ENCODE measurements at regions of chr16 and their contacts with region 1.

Region 1: GRCh38 chr16:73058221-73058615 is 10.3 kb upstream of the ZFHX3 start:
- DNase-seq: peak; percentile 63 to 78
- H3K4me3 ChIP-seq: peak overlapping the region; percentile 58
- H3K4me3 Mint-ChIP-seq: peak overlapping the region; percentile 91
- H3K27ac Mint-ChIP-seq: no peak overlapping the region
- H3K4me1 ChIP-seq: peaks cover 42% of the 10 kb centered on the region
- H3K4me1 Mint-ChIP-seq: peaks cover 52% of the 10 kb centered on the region
- H3K27me3 ChIP-seq: no peaks in the 10 kb centered on the region
- H3K27me3 Mint-ChIP-seq: no peaks in the 10 kb centered on the region
- CTCF ChIP-seq: no peak

Region 2: GRCh38 chr16:73071131-73071940 is 13.1 kb after region 1 on chr16:
- CTCF ChIA-PET with region 1: interaction called, 4 read pairs
- POLR2A ChIA-PET with region 1: no interaction called
- intact Hi-C with region 1: loop called (anchors 1 kb)
- DNase-seq: peak in 1 of 2 experiments; percentile 33
- H3K4me3 ChIP-seq: peak overlapping the region; percentile 19
- H3K4me3 Mint-ChIP-seq: peak overlapping the region; percentile 95
- H3K27ac Mint-ChIP-seq: peak overlapping the region; percentile 97
- H3K4me1 ChIP-seq: peaks cover 16% of the 10 kb centered on the region
- H3K4me1 Mint-ChIP-seq: peaks cover 21% of the 10 kb centered on the region
- H3K27me3 ChIP-seq: no peaks in the 10 kb centered on the region
- H3K27me3 Mint-ChIP-seq: no peaks in the 10 kb centered on the region
- CTCF ChIP-seq: no peak

Region 3: GRCh38 chr16:73172241-73172972 is 114.2 kb after region 1 on chr16:
- CTCF ChIA-PET with region 1: no interaction called
- POLR2A ChIA-PET with region 1: no interaction called
- intact Hi-C with region 1: loop called (anchors 5 kb)
- DNase-seq: no peak
- H3K4me3 ChIP-seq: no peak overlapping the region
- H3K4me3 Mint-ChIP-seq: no peak overlapping the region
- H3K27ac Mint-ChIP-seq: no peak overlapping the region
- H3K4me1 ChIP-seq: 0 out of 2 replicates have a peak, but pooled peaks cover 7% of the 10 kb centered on the region
- H3K4me1 Mint-ChIP-seq: peaks cover 7% of the 10 kb centered on the region
- H3K27me3 ChIP-seq: no peaks in the 10 kb centered on the region
- H3K27me3 Mint-ChIP-seq: peaks cover 5% of the 10 kb centered on the region
- CTCF ChIP-seq: peak in 1 of 2 experiments; percentile 43

Measured in Caco-2 (cell line).